ENCODE measurements at regions of chr6 and their contacts with region 1.

Region 1: DNA sequence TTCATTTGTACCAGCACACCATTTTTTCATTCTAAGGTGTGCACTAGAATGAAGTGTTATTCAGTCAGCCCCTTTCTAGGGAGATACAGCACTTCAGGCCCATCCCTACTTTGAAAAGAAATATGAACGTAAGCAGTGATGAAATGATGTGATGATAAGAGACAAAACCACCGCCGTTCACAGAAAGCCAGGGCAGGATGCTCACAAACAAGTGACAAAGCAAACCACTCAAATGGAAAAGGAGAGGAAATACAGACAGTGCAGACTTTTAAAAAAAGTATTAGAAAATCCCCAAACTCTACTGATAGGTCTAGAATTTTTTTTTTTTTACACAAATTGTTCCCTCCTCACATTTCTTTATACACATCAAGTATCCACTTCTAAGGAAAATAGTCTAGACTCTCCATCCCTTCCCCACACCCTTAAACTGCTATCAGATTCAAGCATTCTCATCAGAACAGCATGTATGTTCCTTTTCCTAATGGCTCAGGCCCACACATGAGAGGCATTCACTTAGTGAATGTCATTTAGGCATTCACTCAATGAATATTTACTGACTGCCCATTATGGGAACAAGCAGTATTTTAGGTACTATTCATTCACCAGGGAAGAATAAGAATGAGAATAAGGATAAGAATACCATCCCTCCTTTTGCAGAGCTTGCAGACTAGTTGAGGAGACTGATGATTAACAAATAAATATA is 243.5 kb downstream of the GMPR start:
- DNase-seq: peak; percentile 74
- H3K4me3 Mint-ChIP-seq: peak overlapping the region; percentile 56
- H3K27ac Mint-ChIP-seq: peak overlapping the region; percentile 97
- H3K4me1 Mint-ChIP-seq: peaks cover 89% of the 10 kb centered on the region
- H3K27me3 Mint-ChIP-seq: no peaks in the 10 kb centered on the region

Region 2: DNA sequence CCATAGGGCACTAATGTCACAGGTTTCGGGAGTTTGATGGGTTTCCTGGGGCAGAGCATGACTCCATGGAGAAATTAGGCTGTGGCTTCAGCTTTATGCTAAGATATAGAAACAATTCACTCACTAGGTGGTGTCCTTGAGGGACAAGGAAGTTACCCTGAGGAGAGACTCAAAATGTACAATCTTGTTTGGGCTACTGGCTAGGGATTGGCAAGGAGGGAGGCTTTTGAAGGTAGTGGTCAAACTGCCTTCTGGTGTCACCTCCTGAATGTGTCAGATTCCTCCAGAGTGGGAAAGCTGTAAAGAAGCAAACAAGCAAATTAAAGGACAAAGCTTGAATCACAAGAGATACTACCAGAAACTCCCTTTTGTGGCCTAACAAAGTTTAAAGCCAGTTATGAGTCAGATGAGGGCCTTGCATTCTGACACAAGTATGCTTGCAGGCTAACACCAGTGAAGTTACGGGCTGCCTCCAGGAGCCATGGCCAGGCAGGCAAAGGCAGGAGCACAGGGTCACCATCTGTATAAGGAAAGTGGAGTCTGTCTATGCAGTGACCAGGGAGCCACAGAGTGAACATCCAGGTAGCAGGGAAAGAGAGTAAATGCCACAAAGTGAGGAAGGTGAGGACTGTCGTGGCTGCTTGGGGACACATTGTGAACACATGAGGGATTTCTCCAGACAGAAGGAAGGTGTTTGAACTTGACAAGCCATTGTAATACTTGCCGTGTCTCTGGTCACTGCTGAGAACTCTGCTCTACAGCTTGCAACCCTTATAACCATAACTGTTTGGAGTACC is 711.3 kb before region 1 on chr6:
- intact Hi-C with region 1: loop called (anchors 10 kb)
- DNase-seq: no peak
- H3K4me3 Mint-ChIP-seq: no peak overlapping the region
- H3K27ac Mint-ChIP-seq: peak overlapping the region; percentile 90
- H3K4me1 Mint-ChIP-seq: peaks cover 28% of the 10 kb centered on the region
- H3K27me3 Mint-ChIP-seq: no peaks in the 10 kb centered on the region

Region 3: GRCh38 chr6:16438718-16439591 is 42.9 kb before region 1 on chr6:
- intact Hi-C with region 1: loop called (anchors 1 kb)
- DNase-seq: no peak
- H3K4me3 Mint-ChIP-seq: peak overlapping the region; percentile 51
- H3K27ac Mint-ChIP-seq: peak overlapping the region; percentile 79
- H3K4me1 Mint-ChIP-seq: peaks cover 81% of the 10 kb centered on the region
- H3K27me3 Mint-ChIP-seq: no peaks in the 10 kb centered on the region

Region 4: DNA sequence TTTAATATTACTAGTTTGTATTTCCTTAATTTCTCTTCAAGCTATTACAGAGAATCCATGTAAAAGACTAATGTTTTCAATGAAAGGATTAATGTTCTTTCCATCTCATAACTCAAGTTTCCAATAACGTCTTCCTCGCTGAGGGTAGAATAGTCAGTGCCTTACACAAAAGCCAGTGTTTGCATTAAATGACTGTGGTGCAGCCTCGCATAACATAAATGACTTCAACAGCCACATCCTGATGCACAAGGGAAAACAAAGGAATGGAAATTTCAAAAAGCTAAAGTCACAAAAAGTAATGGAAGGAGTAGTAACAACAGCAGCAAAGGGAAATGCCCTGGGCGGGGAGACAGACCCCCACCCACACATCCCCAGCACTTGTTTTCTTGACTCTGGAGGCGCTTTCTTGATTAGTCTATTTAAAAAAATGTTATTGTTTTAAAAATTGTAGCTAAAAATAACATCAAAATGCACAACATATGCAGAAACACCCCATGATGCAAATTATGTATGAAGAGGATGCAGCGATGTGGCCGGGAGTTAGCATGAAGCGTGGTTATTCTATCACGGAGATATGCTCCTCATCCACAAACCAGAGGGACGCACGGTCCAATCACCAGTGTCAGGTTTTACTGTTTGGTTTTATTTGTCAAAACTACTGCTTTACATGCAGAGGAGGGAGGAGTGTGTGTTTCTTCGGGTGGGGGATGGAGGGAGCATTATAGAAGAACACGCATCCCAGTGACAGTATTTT is 14.9 kb before region 1 on chr6:
- intact Hi-C with region 1: loop called (anchors 2 kb)
- DNase-seq: no peak
- H3K4me3 Mint-ChIP-seq: peak overlapping the region; percentile 11
- H3K27ac Mint-ChIP-seq: peak overlapping the region; percentile 64
- H3K4me1 Mint-ChIP-seq: peaks cover 62% of the 10 kb centered on the region
- H3K27me3 Mint-ChIP-seq: no peaks in the 10 kb centered on the region

Region 5: GRCh38 chr6:16503970-16504415 is 22.1 kb after region 1 on chr6:
- intact Hi-C with region 1: loop called (anchors 1 kb)
- DNase-seq: no peak
- H3K4me3 Mint-ChIP-seq: peak overlapping the region; percentile 26
- H3K27ac Mint-ChIP-seq: peak overlapping the region; percentile 75
- H3K4me1 Mint-ChIP-seq: peaks cover 55% of the 10 kb centered on the region
- H3K27me3 Mint-ChIP-seq: no peaks in the 10 kb centered on the region

Region 6: DNA sequence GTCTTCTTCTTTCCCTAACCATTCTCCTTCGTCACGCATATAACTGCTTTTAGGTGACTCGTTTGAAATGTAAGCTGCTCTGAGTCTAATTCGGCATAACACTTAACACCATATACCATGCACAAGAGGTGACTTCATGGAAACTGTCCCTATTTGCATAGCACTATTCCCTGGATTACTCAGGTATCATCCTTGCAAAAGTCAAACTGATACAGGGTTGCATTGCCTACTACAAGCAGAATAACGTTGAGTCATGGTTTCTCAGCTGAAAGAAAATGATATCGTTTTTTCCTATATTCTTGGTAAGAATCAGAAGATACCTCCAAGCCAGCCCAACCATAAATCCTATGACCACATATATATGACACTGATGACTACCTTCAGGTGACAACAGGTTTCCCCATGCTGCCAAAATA is 51.9 kb after region 1 on chr6:
- intact Hi-C with region 1: loop called (anchors 1 kb)
- DNase-seq: no peak
- H3K4me3 Mint-ChIP-seq: no peak overlapping the region
- H3K27ac Mint-ChIP-seq: peak overlapping the region; percentile 83
- H3K4me1 Mint-ChIP-seq: peaks cover 45% of the 10 kb centered on the region
- H3K27me3 Mint-ChIP-seq: no peaks in the 10 kb centered on the region

Region 7: GRCh38 chr6:16929809-16930208 is 448.0 kb after region 1 on chr6:
- intact Hi-C with region 1: no loop called
- DNase-seq: no peak
- H3K4me3 Mint-ChIP-seq: no peak overlapping the region
- H3K27ac Mint-ChIP-seq: no peak overlapping the region
- H3K4me1 Mint-ChIP-seq: no peaks in the 10 kb centered on the region
- H3K27me3 Mint-ChIP-seq: peaks cover 12% of the 10 kb centered on the region